ENCODE measurements at regions of chr1 and their contacts with region 1.

Region 1: GRCh38 chr1:157156058-157156541 is 17.9 kb upstream of the ETV3 start:
- DNase-seq: peak; percentile 75
- H3K4me3 ChIP-seq: peak overlapping the region; percentile 48
- H3K27ac ChIP-seq: peak overlapping the region; percentile 46
- H3K4me1 ChIP-seq: peaks cover 31% of the 10 kb centered on the region
- H3K27me3 ChIP-seq: peaks cover 27% of the 10 kb centered on the region
- CTCF ChIP-seq: peak; percentile 98

Region 2: DNA sequence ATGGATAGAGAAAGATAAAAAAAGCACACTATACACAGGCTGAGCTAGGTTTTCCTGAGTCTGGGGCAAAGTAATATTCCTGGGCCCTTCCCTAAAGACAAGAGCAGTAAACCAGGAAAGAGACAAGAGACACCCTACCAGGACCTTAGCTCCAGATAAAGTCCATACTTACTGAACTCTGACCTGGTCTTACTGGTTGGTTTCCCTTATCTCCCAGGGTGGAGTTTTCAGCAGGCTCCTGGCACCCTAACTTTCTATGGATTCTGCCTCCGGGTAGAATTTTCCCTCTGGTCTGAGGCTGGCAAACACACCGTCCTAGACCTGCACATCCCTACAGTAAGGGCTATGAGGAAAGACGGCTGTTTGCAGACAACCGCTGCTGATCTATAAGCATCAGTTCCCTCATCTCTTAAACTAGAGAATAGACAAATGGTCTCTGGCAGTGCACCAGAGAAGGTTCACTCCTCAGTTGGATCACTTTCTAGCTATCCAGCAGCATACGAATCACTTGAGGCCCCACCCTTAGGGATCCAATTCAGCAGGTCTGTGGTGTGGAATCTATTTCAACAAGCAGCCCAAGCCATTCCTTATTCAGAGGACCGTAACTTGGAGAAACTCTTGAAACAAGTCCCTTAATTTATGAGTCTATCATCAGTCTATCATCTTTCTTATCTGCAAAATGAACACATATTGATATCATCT is 162.5 kb before region 1 on chr1:
- intact Hi-C with region 1: no loop called
- DNase-seq: no peak
- H3K4me3 ChIP-seq: no peak overlapping the region
- H3K27ac ChIP-seq: no peak overlapping the region
- H3K4me1 ChIP-seq: peaks cover 3% of the 10 kb centered on the region
- H3K27me3 ChIP-seq: no peaks in the 10 kb centered on the region
- CTCF ChIP-seq: no peak

Region 3: GRCh38 chr1:157090196-157090647 is 65.9 kb before region 1 on chr1:
- intact Hi-C with region 1: loop called (anchors 2 kb)
- DNase-seq: peak; percentile 84
- H3K4me3 ChIP-seq: no peak overlapping the region
- H3K27ac ChIP-seq: peak overlapping the region; percentile 11
- H3K4me1 ChIP-seq: peaks cover 16% of the 10 kb centered on the region
- H3K27me3 ChIP-seq: peaks cover 4% of the 10 kb centered on the region
- CTCF ChIP-seq: peak; percentile 97

Measured in left ventricle myocardium inferior (tissue), 1 donor.